ENCODE measurements at regions of chr3 and their contacts with region 1.

Region 1: GRCh38 chr3:9362731-9363530 is at the start of gene THUMPD3:
- DNase-seq: peak; percentile 91 to 98 (median 92)
- ATAC-seq: peak; percentile 96
- H3K4me3 ChIP-seq: peak within 1 kb of the TSS; percentile 63
- H3K27ac ChIP-seq: peak within 1 kb of the TSS; percentile 94
- H3K4me1 ChIP-seq: peaks cover 4 to 13% of the 10 kb centered on the region in 2 experiments; a peak in 4 of 5 replicates
- H3K27me3 ChIP-seq: no peaks in the 10 kb centered on the region
- CTCF ChIP-seq: peak in 2 of 3 experiments; percentile 8 to 27; a peak in 2 of 6 replicates
- EP300 ChIP-seq: peak; percentile 51
- POLR2A ChIP-seq: peak; percentile 99
- RAD21 ChIP-seq: no peak
- polyA plus RNA-seq, gene THUMPD3: 58.3 to 78.1 TPM

Region 2: DNA sequence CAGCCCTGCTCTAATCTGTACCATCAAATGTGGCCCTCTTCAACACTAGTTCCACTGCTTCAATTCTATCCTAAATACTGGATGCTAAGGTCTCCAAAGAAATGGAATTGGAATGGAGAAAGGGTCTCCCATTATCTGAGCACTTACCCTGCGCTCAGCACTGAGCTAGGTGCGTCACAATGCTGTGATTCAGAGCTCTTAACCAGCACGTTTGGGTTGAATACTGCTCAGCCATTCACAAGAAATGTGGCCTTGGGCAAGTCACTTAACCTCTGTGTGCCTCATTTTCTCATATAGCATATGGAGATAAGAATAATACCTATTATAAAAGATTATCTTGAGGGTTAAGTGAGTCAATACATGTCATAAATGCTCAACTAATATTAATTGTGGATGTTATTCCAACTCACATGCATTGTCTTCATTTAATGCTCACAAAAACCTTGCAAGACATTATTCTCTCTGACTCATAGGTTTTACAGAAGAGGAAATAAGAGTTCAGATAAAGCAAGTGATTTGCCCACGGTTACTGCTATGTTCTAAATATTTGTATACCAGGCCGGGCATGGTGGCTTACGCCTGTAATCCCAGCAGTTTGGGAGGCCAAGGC is 86.1 kb before region 1 on chr3:
- CTCF ChIA-PET with region 1: no interaction called
- POLR2A ChIA-PET with region 1: no interaction called
- in situ Hi-C with region 1: no loop called
- intact Hi-C with region 1: no loop called
- DNase-seq: no peak
- ATAC-seq: no peak
- H3K4me3 ChIP-seq: no peak overlapping the region
- H3K27ac ChIP-seq: no peak overlapping the region
- H3K4me1 ChIP-seq: no peaks in the 10 kb centered on the region
- H3K27me3 ChIP-seq: peaks cover 10 to 15% of the 10 kb centered on the region in 2 experiments; a peak in 3 of 5 replicates
- CTCF ChIP-seq: no peak
- EP300 ChIP-seq: no peak
- POLR2A ChIP-seq: no peak
- RAD21 ChIP-seq: no peak

Region 3: DNA sequence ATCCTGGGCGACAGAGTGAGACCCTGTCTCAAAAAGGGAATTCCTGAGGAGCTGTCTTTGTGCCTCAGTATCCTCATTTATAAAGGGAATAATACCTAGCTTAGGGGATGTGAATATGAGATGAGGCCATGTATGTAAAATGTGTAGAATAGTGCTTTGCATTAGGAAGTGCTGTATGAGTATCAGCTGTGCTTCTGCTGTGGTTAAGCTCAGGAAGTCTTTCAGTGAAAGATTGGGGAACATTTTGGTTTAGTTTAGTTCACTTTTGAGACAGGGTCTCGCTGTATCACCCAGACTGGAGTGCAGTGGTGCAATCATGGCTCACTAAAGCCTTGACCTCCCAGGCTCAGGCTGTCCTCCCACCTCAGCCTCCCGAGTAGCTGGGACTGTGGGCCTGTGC is 10.5 kb after region 1 on chr3:
- CTCF ChIA-PET with region 1: no interaction called
- POLR2A ChIA-PET with region 1: interaction called, 49 read pairs
- in situ Hi-C with region 1: no loop called
- intact Hi-C with region 1: no loop called
- DNase-seq: no peak
- ATAC-seq: no peak
- H3K4me3 ChIP-seq: no peak overlapping the region
- H3K27ac ChIP-seq: no peak overlapping the region
- H3K4me1 ChIP-seq: no peaks in the 10 kb centered on the region
- H3K27me3 ChIP-seq: no peaks in the 10 kb centered on the region
- CTCF ChIP-seq: no peak
- EP300 ChIP-seq: no peak
- POLR2A ChIP-seq: no peak
- RAD21 ChIP-seq: no peak

Region 4: DNA sequence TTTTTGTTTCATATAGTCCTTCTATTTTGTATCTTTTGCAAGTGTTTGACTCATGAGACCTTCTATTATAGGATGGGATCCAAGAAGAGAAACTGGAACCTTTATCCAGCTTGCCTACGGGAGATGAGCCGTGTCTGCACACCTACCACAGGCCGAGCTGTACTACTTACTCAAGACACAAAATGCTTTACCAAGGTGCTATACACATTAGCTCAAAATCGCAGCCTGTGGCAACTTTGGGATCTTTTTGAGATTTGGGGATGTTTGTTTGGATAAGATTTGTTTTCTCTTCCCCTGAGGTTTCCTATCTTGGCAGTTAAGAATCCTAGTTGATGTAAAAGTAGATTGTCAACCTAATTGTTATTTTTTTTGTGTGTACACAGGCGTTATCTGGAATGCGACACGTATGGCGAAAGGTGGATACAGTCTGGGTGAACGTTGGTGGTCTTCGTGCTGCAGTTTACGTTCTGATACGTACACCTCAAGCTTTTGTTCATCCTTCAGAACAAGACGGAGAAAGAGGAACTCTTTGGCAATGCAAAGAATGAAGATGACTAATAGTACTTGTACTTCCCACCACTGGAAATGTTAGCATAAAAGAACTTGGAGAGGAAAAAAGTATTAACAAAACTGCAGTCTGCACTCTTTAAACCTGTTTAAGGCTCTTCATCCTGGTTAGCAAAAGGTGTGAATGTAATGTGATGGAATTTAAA is 21.4 kb after region 1 on chr3:
- CTCF ChIA-PET with region 1: no interaction called
- POLR2A ChIA-PET with region 1: interaction called, 21 read pairs
- in situ Hi-C with region 1: no loop called
- intact Hi-C with region 1: no loop called
- DNase-seq: no peak
- ATAC-seq: no peak
- H3K4me3 ChIP-seq: no peak overlapping the region
- H3K27ac ChIP-seq: no peak overlapping the region
- H3K4me1 ChIP-seq: no peaks in the 10 kb centered on the region
- H3K27me3 ChIP-seq: no peaks in the 10 kb centered on the region
- CTCF ChIP-seq: no peak
- EP300 ChIP-seq: no peak
- POLR2A ChIP-seq: no peak; the same call in 1 of the 2 replicates
- RAD21 ChIP-seq: no peak

Region 5: GRCh38 chr3:9422712-9423424 is 59.9 kb after region 1 on chr3:
- CTCF ChIA-PET with region 1: no interaction called
- POLR2A ChIA-PET with region 1: interaction called, 13 read pairs
- in situ Hi-C with region 1: loop called (anchors 5 kb)
- intact Hi-C with region 1: loop called (anchors 1 kb)
- DNase-seq: peak; percentile 53 to 91 (median 66)
- ATAC-seq: peak; percentile 92
- H3K4me3 ChIP-seq: no peak overlapping the region
- H3K27ac ChIP-seq: peak overlapping the region; percentile 77
- H3K4me1 ChIP-seq: peaks cover 0 to 21% of the 10 kb centered on the region in 2 experiments; a peak in 3 of 5 replicates
- H3K27me3 ChIP-seq: no peaks in the 10 kb centered on the region
- CTCF ChIP-seq: peak; percentile 48 to 78 (median 66); a peak in 5 of 6 replicates
- EP300 ChIP-seq: peak; percentile 87
- POLR2A ChIP-seq: no peak
- RAD21 ChIP-seq: peak; percentile 75 to 94

Region 6: DNA sequence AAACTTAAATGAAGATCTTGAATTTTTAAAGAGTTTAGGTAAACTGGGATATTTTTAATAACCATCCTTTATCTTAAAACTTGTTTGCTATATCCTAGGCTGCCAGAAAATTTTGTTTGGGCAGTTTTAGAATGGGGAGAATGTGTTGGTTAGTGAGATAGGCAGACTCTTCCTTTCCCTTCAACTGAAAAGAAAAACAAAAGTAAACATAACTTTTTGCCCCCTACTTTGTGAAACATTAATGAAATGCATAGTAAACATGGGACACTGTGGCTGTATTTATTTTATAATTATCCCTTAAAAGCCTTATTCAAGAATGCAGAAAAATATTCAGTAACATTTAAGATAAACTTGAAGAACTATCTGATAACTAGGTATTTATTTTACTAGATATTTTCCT is 65.5 kb after region 1 on chr3:
- CTCF ChIA-PET with region 1: interaction called, 5 read pairs
- POLR2A ChIA-PET with region 1: interaction called, 3 read pairs
- in situ Hi-C with region 1: loop called (anchors 5 kb)
- intact Hi-C with region 1: no loop called
- DNase-seq: no peak
- ATAC-seq: no peak
- H3K4me3 ChIP-seq: no peak overlapping the region
- H3K27ac ChIP-seq: no peak overlapping the region
- H3K4me1 ChIP-seq: no peaks in the 10 kb centered on the region; a peak in 1 of 5 replicates
- H3K27me3 ChIP-seq: no peaks in the 10 kb centered on the region
- CTCF ChIP-seq: no peak
- EP300 ChIP-seq: no peak
- POLR2A ChIP-seq: no peak
- RAD21 ChIP-seq: no peak

Region 7: GRCh38 chr3:9779721-9780457 is 417.0 kb after region 1 on chr3:
- CTCF ChIA-PET with region 1: no interaction called
- POLR2A ChIA-PET with region 1: no interaction called
- in situ Hi-C with region 1: no loop called
- intact Hi-C with region 1: no loop called
- DNase-seq: no peak
- ATAC-seq: no peak; the same call in 1 of the 3 replicates
- H3K4me3 ChIP-seq: no peak overlapping the region
- H3K27ac ChIP-seq: peak overlapping the region; percentile 11; the same call in 1 of the 3 replicates
- H3K4me1 ChIP-seq: peaks cover 13 to 15% of the 10 kb centered on the region in 2 experiments
- H3K27me3 ChIP-seq: no peaks in the 10 kb centered on the region
- CTCF ChIP-seq: no peak
- EP300 ChIP-seq: no peak
- POLR2A ChIP-seq: no peak
- RAD21 ChIP-seq: no peak

Measured in K562 (cell line).